Activated CD4-positive, alpha-beta T cell treated with anti-CD3 and anti-CD28 coated beads, Interleukin-2, amount 10 ng/mL, durations not matched to agents 7 days and 5 days (primary cell): ENCODE measurements at regions of chr6 and their contacts with region 1.

Region 1: DNA sequence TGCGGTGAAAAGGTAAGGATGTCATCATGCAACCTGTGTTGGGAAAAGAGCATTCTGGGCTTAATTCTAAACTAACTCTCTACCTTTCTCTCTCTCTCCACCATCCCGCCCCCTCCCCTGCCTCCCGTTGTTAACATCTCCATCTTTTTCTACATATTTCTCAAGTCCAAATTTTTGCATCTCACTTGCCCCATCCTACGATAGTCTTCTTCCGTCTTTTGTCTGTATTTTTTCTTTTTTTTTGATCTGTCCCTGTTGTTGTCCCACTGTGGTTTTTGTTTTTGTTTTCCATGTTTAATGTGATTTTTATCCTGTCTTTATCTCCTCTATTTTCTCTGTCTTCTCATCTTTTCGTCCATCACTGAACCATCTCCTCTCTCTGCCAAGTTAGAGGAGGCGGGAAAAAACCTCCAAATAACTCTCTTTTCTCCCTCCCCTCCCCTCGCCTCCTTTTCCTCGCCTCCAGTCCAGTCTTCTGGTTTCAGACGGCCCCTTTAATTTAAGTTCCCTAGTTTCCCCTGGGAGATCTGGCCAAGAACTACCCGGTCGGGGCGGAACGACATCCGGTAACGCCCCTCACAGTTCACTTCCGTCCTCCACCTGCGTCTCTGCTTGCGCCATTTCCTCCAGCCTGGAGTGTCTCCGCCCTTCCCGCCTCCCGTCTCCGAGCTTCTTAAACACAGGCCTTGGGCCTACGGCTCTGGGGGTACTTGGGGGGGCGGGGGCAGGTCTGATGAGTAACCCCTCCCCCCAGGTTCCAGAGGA is at the start of gene NFKBIL1:
- DNase-seq: peak; percentile 94
- H3K4me3 Mint-ChIP-seq: peak within 1 kb of the TSS; percentile 89
- H3K27ac Mint-ChIP-seq: peak within 1 kb of the TSS; percentile 95
- H3K4me1 Mint-ChIP-seq: peaks cover 64% of the 10 kb centered on the region
- H3K27me3 Mint-ChIP-seq: no peaks in the 10 kb centered on the region
- total RNA-seq, gene NFKBIL1: 15.8 to 16.0 TPM

Region 2: DNA sequence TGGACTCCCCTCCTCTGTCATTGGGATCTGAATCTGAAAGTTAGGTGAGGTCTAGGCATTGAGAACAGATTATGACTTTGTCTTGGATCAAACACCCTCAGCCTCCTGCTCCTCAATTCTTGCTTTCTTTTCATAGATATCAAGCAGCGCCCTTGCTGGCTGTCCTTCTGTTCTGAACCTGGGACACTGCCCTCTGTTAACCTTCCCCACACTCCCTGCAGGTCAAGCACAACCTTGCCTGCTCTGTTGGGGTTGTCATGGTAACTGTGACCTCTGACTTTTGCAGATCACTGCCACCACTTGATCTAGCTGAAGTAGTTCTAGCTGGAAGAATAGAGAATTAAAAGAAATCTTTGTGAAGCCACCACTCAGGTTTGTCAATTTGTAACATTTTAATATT is 160.2 kb before region 1 on chr6:
- CTCF ChIA-PET with region 1: no interaction called
- POLR2A ChIA-PET with region 1: no interaction called
- DNase-seq: no peak
- H3K4me3 Mint-ChIP-seq: no peak overlapping the region
- H3K27ac Mint-ChIP-seq: no peak overlapping the region
- H3K4me1 Mint-ChIP-seq: no peaks in the 10 kb centered on the region
- H3K27me3 Mint-ChIP-seq: peaks cover 7% of the 10 kb centered on the region

Region 3: GRCh38 chr6:31559958-31560696 is 13.0 kb after region 1 on chr6:
- CTCF ChIA-PET with region 1: interaction called, 16 read pairs
- POLR2A ChIA-PET with region 1: no interaction called
- DNase-seq: peak; percentile 66
- H3K4me3 Mint-ChIP-seq: peak overlapping the region; percentile 62
- H3K27ac Mint-ChIP-seq: peak overlapping the region; percentile 89
- H3K4me1 Mint-ChIP-seq: peaks cover 73% of the 10 kb centered on the region
- H3K27me3 Mint-ChIP-seq: peaks cover 21% of the 10 kb centered on the region

Region 4: DNA sequence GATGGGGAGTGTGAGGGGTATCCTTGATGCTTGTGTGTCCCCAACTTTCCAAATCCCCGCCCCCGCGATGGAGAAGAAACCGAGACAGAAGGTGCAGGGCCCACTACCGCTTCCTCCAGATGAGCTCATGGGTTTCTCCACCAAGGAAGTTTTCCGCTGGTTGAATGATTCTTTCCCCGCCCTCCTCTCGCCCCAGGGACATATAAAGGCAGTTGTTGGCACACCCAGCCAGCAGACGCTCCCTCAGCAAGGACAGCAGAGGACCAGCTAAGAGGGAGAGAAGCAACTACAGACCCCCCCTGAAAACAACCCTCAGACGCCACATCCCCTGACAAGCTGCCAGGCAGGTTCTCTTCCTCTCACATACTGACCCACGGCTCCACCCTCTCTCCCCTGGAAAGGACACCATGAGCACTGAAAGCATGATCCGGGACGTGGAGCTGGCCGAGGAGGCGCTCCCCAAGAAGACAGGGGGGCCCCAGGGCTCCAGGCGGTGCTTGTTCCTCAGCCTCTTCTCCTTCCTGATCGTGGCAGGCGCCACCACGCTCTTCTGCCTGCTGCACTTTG is 28.3 kb after region 1 on chr6 and contains the start of gene TNF:
- CTCF ChIA-PET with region 1: interaction called, 111 read pairs
- POLR2A ChIA-PET with region 1: interaction called, 13 read pairs
- DNase-seq: peak; percentile 82
- H3K4me3 Mint-ChIP-seq: peak within 1 kb of the TSS; percentile 90
- H3K27ac Mint-ChIP-seq: peak within 1 kb of the TSS; percentile 88
- H3K4me1 Mint-ChIP-seq: peaks cover 90% of the 10 kb centered on the region
- H3K27me3 Mint-ChIP-seq: no peaks in the 10 kb centered on the region
- total RNA-seq, gene TNF: 46.5 to 47.1 TPM

Region 5: DNA sequence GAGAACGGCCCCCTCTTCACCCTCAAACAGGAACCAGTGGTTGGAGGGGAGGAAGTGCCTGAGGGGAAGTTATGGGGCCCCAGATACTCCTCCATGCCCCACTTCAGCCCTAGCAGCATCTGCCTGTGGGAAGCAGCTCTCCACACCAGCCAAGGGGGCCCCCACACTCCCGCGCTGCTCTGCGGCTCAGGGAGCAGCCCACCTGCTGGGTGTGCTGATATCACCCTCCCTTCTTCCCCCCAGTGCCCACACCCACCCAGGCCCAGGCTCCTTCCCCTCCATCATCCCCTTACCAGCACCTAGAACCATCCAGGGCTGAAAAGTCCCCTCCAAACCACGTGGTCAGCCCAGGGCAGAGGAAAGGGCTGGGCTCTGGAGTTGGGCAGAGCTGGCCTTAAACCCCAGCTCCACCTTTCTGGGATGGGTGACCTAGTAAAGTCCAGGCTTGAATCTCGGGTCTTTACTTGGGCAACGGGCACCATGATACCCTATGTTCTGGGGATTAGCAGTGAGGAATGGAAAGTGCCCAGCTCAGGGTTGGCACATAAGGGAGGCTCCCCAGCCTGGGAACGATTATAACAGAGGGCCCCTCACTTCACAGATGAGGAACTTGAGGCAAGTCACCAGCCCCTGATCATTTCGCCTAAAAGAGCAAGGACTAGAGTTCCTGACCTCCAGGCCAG is 39.6 kb after region 1 on chr6:
- CTCF ChIA-PET with region 1: interaction called, 497 read pairs
- POLR2A ChIA-PET with region 1: no interaction called
- DNase-seq: peak; percentile 37
- H3K4me3 Mint-ChIP-seq: peak overlapping the region; percentile 54
- H3K27ac Mint-ChIP-seq: peak overlapping the region; percentile 94
- H3K4me1 Mint-ChIP-seq: peaks cover 70% of the 10 kb centered on the region
- H3K27me3 Mint-ChIP-seq: no peaks in the 10 kb centered on the region

Region 6: GRCh38 chr6:31739639-31740396 is 192.7 kb after region 1 on chr6 and contains the start of gene MSH5:
- CTCF ChIA-PET with region 1: interaction called, 14 read pairs
- POLR2A ChIA-PET with region 1: no interaction called
- DNase-seq: peak; percentile 98
- H3K4me3 Mint-ChIP-seq: peak within 1 kb of the TSS; percentile 94
- H3K27ac Mint-ChIP-seq: peak within 1 kb of the TSS; percentile 96
- H3K4me1 Mint-ChIP-seq: peaks cover 56% of the 10 kb centered on the region
- H3K27me3 Mint-ChIP-seq: no peaks in the 10 kb centered on the region
- total RNA-seq, gene MSH5: 56.1 to 58.0 TPM